Sciatic nerve (tissue), 2 donors: ENCODE measurements at regions of chr7 and their contacts with region 1.

Region 1: DNA sequence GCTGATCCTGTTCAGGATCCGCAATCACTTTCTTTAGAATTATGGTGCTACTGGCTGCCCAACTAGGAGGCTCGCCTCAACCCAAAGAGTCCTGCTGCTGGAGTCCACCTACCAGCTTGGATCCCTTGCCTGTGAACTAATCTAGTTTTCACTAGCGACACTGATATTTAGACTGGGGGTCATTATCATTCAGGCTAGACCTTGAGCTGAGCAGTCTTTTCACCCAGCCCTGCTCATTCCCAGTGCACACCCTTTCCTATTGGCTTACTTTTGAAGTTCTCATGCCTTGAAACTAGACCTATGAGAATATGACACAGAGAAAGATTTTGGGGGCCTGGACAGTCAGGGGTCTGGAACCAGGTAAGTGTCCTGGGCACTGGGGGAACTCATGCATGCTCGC is 107.9 kb downstream of the TMEM178B start:
- DNase-seq: no peak
- ATAC-seq: no peak

Region 2: DNA sequence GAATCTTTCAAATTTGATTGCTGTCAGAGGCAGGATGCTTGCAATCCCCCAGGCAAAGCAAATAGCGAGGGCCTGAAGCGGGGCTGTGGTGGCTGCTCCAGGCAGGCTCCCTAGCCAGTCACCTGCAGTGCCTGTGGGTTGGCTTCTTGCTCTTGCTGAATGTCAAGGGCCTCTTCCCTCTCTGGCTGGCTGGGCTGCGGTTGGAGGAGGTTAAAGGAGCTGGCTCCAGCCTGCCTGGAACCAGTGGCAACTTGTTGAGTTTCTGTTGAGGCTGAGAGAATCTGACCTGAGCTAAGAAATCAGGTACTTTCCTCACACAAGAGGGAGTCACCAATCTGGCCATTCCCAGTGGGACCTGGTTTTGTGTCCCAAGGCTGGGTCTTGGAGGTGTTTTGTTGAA is 26.7 kb after region 1 on chr7:
- intact Hi-C with region 1: loop called (anchors 2 kb)
- DNase-seq: no peak
- ATAC-seq: no peak